Sciatic nerve (tissue), 2 donors: ENCODE measurements at regions of chr7 and their contacts with region 1.

Region 1: DNA sequence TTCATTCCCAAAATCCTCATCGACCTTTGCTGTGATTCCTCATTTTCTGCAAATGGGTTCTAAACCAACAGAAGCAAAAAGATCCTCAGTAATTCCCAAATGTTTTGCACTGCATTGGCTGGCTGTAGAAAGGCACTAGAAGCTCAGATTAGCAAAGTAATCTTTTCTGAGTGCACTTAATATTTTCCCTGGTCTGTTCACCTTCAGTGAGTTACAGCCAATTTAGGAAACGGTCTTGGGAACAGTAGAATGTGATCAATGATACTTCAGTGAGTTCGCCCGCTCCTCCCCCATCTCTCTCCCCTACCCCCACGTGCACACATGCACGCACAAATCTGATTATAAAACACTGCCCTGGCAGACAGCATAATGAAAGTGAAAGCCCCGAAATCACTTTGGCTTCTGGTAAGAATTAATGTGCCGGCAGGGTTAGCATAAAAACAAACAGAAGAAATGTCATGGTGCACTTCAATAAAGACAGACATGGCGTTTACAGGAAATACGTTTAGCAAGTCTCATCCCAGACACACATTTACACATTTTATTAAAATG is 201.3 kb upstream of the CDCA7L start:
- DNase-seq: no peak
- ATAC-seq: peak; percentile 59

Region 2: GRCh38 chr7:20895563-20895962 is 1251.5 kb before region 1 on chr7:
- intact Hi-C with region 1: no loop called
- DNase-seq: no peak
- ATAC-seq: no peak

Region 3: GRCh38 chr7:22114440-22114981 is 32.5 kb before region 1 on chr7:
- intact Hi-C with region 1: no loop called
- DNase-seq: no peak
- ATAC-seq: no peak

Region 4: DNA sequence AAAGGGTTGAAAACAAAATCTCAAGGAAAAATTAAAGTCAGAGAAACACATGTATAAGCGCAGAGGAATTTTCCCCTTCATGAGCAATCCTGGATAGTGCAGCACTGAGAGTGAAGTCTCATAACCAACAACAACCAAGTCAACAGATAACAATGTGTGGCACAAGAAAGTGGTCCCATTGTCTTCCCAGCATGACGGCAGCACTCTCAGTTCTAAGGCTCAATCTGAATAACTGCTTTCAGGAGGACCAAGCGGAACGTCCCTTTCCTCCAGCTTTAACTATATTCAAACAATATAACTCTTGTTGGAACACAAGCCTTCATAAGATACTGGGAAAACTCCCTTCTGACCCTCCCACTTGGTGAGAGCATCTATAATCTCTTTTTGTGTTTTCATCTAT is 72.0 kb after region 1 on chr7:
- intact Hi-C with region 1: loop called (anchors 10 kb)
- DNase-seq: no peak
- ATAC-seq: peak; percentile 78